Activated CD4-positive, alpha-beta T cell treated with anti-CD3 and anti-CD28 coated beads, Interleukin-2, amount 10 ng/mL, durations not matched to agents 24 days and 14 days (primary cell): ENCODE measurements at regions of chr7 and their contacts with region 1.

Region 1: DNA sequence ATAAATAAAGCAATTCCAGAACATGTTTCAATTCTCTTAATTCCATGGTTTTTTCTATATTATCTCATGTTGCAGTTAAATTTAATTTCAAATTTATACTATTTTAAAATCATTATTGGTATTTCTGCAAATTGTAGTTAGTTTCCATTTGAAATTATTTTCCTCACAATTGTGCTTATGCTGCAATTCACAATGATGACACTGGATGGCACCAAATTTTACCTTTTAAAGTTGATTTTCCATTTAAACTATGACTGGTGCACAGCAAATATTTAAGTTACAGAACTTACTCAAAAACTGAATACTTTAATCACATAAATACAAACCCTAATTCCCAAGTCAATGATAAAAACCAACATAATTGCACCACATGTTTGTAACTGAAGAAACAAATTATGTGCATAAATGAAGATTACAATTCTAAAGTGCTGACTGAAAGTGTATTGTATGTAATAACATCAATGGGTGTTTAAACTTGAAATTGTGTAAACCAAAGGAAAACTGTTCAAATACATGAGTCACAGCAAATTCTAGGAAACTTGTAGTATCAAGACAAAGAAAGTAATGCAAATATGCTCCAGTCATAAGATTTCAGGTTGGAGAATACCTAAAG is 75.3 kb upstream of the AASS start:
- DNase-seq: no peak
- H3K4me3 Mint-ChIP-seq: no peak overlapping the region
- H3K27ac Mint-ChIP-seq: no peak overlapping the region
- H3K4me1 Mint-ChIP-seq: no peaks in the 10 kb centered on the region
- H3K27me3 Mint-ChIP-seq: no peaks in the 10 kb centered on the region

Region 2: GRCh38 chr7:122046354-122046753 is 173.0 kb before region 1 on chr7:
- intact Hi-C with region 1: no loop called
- DNase-seq: no peak
- H3K4me3 Mint-ChIP-seq: no peak overlapping the region
- H3K27ac Mint-ChIP-seq: no peak overlapping the region
- H3K4me1 Mint-ChIP-seq: no peaks in the 10 kb centered on the region
- H3K27me3 Mint-ChIP-seq: no peaks in the 10 kb centered on the region

Region 3: GRCh38 chr7:122528879-122529481 is 309.6 kb after region 1 on chr7:
- intact Hi-C with region 1: loop called (anchors 2 kb)
- DNase-seq: no peak
- H3K4me3 Mint-ChIP-seq: no peak overlapping the region
- H3K27ac Mint-ChIP-seq: no peak overlapping the region
- H3K4me1 Mint-ChIP-seq: no peaks in the 10 kb centered on the region
- H3K27me3 Mint-ChIP-seq: no peaks in the 10 kb centered on the region

Region 4: GRCh38 chr7:122674502-122674901 is 455.1 kb after region 1 on chr7:
- intact Hi-C with region 1: no loop called
- DNase-seq: no peak
- H3K4me3 Mint-ChIP-seq: no peak overlapping the region
- H3K27ac Mint-ChIP-seq: no peak overlapping the region
- H3K4me1 Mint-ChIP-seq: no peaks in the 10 kb centered on the region
- H3K27me3 Mint-ChIP-seq: no peaks in the 10 kb centered on the region

Region 5: GRCh38 chr7:123154231-123154860 is 935.0 kb after region 1 on chr7:
- intact Hi-C with region 1: loop called (anchors 10 kb)
- DNase-seq: peak; percentile 79
- H3K4me3 Mint-ChIP-seq: no peak overlapping the region
- H3K27ac Mint-ChIP-seq: no peak overlapping the region
- H3K4me1 Mint-ChIP-seq: no peaks in the 10 kb centered on the region
- H3K27me3 Mint-ChIP-seq: no peaks in the 10 kb centered on the region